GM12878 (cell line): ENCODE measurements at regions of chr18 and their contacts with region 1.

Region 1: DNA sequence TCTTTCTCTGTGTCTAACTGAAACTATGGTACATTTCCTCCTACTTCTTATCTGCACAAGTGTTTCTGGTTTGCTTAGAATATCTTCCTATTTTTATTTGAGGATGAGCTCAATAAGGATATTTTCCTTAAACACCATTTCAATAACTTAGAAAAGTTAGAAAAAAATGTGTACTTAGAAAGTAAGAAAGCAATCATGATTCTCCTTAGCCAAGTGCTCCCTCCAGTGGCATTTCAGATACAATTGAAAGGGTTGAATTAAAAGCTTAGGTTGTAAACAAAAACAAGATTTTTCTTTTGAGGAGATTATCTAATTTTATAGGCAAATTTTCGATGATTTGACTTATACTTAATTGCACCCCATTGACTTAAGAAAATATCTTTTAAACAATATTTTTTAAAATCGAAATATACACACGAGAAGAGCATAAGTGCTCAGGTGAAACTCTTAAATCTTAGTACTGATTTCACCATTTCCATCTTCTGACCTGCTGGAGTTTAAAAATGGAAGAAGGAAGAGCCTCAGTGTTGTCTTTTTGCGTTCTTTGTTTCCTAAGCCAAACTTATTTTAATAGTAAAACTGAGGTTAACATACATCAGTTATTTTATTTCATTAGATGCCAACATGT is 26.9 kb downstream of the C18orf63 start:
- DNase-seq: no peak
- ATAC-seq: 0 out of 3 replicates have a peak, but pooled peaks have one; percentile 45
- H3K4me3 ChIP-seq: no peak overlapping the region
- H3K27ac ChIP-seq: no peak overlapping the region
- H3K4me1 ChIP-seq: no peaks in the 10 kb centered on the region
- H3K27me3 ChIP-seq: no peaks in the 10 kb centered on the region
- CTCF ChIP-seq: peak; percentile 35 to 74 (median 38); a peak in 5 of 6 replicates
- EP300 ChIP-seq: no peak
- POLR2A ChIP-seq: no peak
- RAD21 ChIP-seq: peak; percentile 90

Region 2: GRCh38 chr18:74040459-74041332 is 301.8 kb before region 1 on chr18:
- CTCF ChIA-PET with region 1: interaction called, 15 read pairs
- POLR2A ChIA-PET with region 1: no interaction called
- RAD21 ChIA-PET with region 1: no interaction called
- SMC1A ChIA-PET with region 1: interaction called, 5 read pairs
- in situ Hi-C with region 1: no loop called
- intact Hi-C with region 1: loop called (anchors 1 kb)
- DNase-seq: no peak
- ATAC-seq: peak; percentile 97
- H3K4me3 ChIP-seq: no peak overlapping the region
- H3K27ac ChIP-seq: no peak overlapping the region
- H3K4me1 ChIP-seq: no peaks in the 10 kb centered on the region
- H3K27me3 ChIP-seq: no peaks in the 10 kb centered on the region; a peak in 1 of 4 replicates
- CTCF ChIP-seq: peak; percentile 62 to 77 (median 73)
- EP300 ChIP-seq: no peak
- POLR2A ChIP-seq: no peak
- RAD21 ChIP-seq: peak; percentile 61

Region 3: DNA sequence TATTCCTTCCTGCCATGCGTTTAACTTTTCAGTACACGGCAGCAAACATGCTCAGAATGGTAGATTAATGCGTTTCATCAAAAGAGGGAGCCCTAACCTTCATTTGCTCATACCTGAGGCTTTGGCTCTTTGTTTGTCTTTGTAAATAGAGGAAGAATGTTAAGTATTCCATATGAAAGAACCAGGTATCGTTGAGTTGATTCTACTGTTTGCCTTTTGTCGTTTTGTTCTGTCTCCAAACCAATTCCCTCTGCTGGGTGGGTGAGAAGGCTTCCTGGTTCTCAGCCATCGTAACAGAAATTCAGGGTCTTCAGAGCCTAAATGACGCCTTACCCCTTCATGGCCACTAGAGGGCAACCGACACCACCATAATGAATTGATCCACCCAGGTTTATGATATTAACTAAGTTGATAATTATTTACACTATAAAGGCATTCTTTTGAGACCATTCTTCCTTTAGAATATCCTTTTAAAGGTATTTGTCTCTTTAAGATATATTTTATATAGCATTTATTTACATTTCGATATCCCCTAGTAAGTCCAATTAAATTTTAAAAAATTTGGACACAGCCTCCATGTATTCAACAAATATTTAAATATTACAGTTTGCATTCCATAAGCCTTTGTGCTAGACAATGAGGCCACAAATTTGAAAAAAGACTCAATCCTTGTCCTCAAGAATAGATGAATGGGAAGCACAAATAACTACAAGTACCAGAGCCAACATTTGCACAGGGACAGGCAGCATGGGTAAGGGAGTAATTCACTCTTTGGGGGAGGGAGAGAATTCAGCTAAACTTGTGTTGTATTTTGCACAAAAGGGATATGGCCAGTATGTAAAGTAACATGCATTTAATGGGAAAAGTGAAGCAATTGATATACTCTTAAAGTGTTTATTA is 146.1 kb before region 1 on chr18:
- CTCF ChIA-PET with region 1: interaction called, 79 read pairs
- POLR2A ChIA-PET with region 1: no interaction called
- RAD21 ChIA-PET with region 1: interaction called, 44 read pairs
- SMC1A ChIA-PET with region 1: interaction called, 45 read pairs
- in situ Hi-C with region 1: no loop called
- intact Hi-C with region 1: loop called (anchors 1 kb)
- DNase-seq: peak; percentile 36
- ATAC-seq: peak; percentile 93
- H3K4me3 ChIP-seq: no peak overlapping the region
- H3K27ac ChIP-seq: no peak overlapping the region
- H3K4me1 ChIP-seq: no peaks in the 10 kb centered on the region
- H3K27me3 ChIP-seq: peaks cover 0 to 3% of the 10 kb centered on the region in 2 experiments; a peak in 1 of 4 replicates
- CTCF ChIP-seq: peak; percentile 65 to 85 (median 67)
- EP300 ChIP-seq: no peak
- POLR2A ChIP-seq: no peak
- RAD21 ChIP-seq: peak; percentile 89

Region 4: DNA sequence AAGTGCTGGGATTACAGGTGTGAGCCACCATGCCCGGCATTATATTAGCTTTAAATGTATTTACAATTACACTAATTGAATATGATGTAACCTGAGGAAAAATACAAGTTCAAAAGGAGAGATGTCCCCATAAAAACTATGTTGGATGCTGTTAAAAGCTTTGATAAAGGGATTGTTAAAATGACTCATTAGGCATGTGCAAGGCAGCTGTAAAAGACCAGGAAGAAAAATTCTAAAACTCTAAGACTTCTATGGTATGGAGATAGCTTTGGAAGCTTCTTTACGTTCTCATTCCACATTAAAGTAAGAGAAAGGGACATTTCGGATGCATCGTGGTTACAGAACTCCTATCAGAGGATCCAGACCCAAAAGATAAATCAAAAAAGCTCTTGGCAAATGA is 101.1 kb before region 1 on chr18:
- CTCF ChIA-PET with region 1: interaction called, 13 read pairs
- POLR2A ChIA-PET with region 1: no interaction called
- RAD21 ChIA-PET with region 1: interaction called, 7 read pairs
- SMC1A ChIA-PET with region 1: interaction called, 6 read pairs
- in situ Hi-C with region 1: no loop called
- intact Hi-C with region 1: no loop called
- DNase-seq: no peak
- ATAC-seq: no peak
- H3K4me3 ChIP-seq: no peak overlapping the region
- H3K27ac ChIP-seq: no peak overlapping the region
- H3K4me1 ChIP-seq: no peaks in the 10 kb centered on the region
- H3K27me3 ChIP-seq: peaks cover 0 to 3% of the 10 kb centered on the region in 2 experiments
- CTCF ChIP-seq: no peak
- EP300 ChIP-seq: no peak
- POLR2A ChIP-seq: no peak
- RAD21 ChIP-seq: no peak

Region 5: GRCh38 chr18:74331404-74331803 is 11.1 kb before region 1 on chr18:
- CTCF ChIA-PET with region 1: interaction called, 10 read pairs
- POLR2A ChIA-PET with region 1: no interaction called
- RAD21 ChIA-PET with region 1: no interaction called
- SMC1A ChIA-PET with region 1: interaction called, 6 read pairs
- in situ Hi-C with region 1: no loop called
- intact Hi-C with region 1: no loop called
- DNase-seq: no peak
- ATAC-seq: peak; percentile 79
- H3K4me3 ChIP-seq: no peak overlapping the region
- H3K27ac ChIP-seq: no peak overlapping the region
- H3K4me1 ChIP-seq: peaks cover 5% of the 10 kb centered on the region
- H3K27me3 ChIP-seq: no peaks in the 10 kb centered on the region
- CTCF ChIP-seq: peak; percentile 32 to 39 (median 37); a peak in 5 of 6 replicates
- EP300 ChIP-seq: no peak
- POLR2A ChIP-seq: no peak
- RAD21 ChIP-seq: 0 out of 2 replicates have a peak, but pooled peaks have one; percentile 27

Region 6: DNA sequence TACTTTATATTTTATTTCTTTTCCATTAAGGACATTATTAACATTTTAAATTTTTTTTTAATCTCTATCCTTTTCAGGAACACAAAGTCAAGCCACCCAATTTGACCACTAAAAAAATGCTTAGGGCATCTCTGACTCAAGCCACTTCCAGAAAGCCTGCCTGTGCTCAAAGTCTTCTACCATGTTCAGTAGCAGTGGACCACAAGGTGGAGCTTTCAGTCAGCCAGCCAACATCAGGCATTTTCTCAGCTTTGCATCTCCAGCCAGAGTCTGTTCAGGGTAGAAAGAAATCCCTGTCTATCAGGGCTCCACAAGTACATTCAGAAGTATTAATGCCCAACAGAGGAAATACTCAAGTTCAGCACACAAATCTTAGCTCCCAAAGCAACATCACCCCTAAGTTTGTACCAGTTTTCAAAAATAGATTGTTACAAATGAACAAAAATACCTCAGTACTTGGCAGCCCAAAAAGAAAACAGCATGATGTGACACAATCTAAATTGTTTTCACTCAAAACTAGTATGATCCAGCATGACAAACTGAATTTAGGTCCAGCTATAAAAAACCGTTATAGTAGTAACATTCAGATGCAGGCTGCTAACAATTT is 10.7 kb after region 1 on chr18:
- CTCF ChIA-PET with region 1: interaction called, 16 read pairs
- POLR2A ChIA-PET with region 1: no interaction called
- RAD21 ChIA-PET with region 1: no interaction called
- SMC1A ChIA-PET with region 1: interaction called, 7 read pairs
- in situ Hi-C with region 1: no loop called
- intact Hi-C with region 1: no loop called
- DNase-seq: peak; percentile 24
- ATAC-seq: peak; percentile 88
- H3K4me3 ChIP-seq: no peak overlapping the region
- H3K27ac ChIP-seq: no peak overlapping the region
- H3K4me1 ChIP-seq: peaks cover 3% of the 10 kb centered on the region; the same call in 1 of the 2 replicates
- H3K27me3 ChIP-seq: peaks cover 0 to 2% of the 10 kb centered on the region in 2 experiments; a peak in 1 of 4 replicates
- CTCF ChIP-seq: peak; percentile 67 to 72 (median 71); a peak in 5 of 6 replicates
- EP300 ChIP-seq: no peak
- POLR2A ChIP-seq: no peak
- RAD21 ChIP-seq: peak; percentile 83

Region 7: DNA sequence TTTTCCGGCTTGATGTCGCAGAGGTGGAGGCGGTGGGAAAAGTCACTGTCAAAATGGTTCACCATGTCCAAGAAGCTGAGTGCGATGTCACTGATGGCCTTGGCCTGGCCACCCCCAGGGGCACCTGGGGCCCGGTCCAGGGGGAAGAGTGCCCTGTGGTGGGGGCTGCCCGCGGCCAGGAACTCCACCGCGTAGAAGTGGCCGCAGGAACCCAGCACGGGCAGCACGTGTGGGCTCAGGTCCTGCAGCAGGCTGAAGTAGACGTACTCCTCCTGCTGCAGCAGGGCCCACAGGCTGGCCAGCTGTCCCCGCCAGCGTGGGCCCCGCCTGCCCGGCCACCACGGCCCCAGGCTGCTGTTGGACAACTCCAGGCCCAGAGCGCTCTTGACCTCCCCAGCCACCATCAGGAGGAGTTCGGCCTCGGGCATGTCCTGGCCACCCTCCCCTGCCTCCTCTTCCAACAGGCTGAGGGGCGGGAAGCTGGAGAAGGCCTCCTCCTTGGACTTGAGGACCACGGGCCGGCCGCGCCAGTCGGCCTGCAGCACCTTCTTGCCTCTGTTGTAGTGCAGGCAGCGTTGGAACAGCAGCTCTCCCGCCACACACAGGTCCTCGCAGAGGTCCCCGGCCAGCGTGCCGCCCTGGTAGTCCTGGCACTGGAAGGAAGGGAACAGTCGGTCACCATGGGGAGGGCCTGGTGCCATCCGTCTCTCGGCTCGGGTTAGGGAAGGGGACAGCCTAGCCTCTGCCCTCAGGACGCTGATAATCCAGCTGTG is 104.3 kb after region 1 on chr18:
- CTCF ChIA-PET with region 1: no interaction called
- POLR2A ChIA-PET with region 1: no interaction called
- RAD21 ChIA-PET with region 1: no interaction called
- SMC1A ChIA-PET with region 1: no interaction called
- in situ Hi-C with region 1: no loop called
- intact Hi-C with region 1: no loop called
- DNase-seq: no peak
- ATAC-seq: no peak
- H3K4me3 ChIP-seq: no peak overlapping the region
- H3K27ac ChIP-seq: no peak overlapping the region
- H3K4me1 ChIP-seq: no peaks in the 10 kb centered on the region
- H3K27me3 ChIP-seq: peaks cover 0 to 5% of the 10 kb centered on the region in 2 experiments; a peak in 2 of 4 replicates
- CTCF ChIP-seq: no peak
- EP300 ChIP-seq: no peak
- POLR2A ChIP-seq: no peak
- RAD21 ChIP-seq: no peak

Region 8: DNA sequence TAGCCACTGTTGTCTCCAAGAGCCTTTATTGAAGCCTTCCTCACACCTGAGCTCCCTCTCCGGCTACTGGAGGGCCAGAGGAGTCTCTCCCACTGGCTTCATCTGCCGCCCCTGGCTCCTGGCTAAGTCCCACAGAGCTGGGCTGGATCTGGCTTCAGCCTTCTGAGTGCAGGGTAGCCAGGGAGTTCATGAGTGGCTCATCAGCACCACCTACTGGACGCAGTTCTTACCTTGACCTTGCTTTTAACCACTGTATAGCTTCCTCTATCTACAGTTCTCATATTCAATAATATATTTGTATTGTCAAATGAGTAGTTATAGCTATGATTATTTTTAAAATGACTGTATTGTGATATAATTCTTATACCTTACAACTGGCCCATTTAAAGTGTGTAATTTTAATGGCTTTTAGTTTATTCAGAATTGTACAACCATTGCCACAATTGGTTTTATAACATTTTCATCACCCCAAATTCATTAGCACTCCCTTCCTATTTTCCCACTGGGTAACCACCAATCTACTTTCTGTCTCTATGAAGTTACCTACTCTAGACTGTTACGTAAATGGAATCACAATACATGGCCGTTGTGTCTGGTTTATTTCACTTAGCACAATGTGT is 209.5 kb after region 1 on chr18:
- CTCF ChIA-PET with region 1: interaction called, 14 read pairs
- POLR2A ChIA-PET with region 1: no interaction called
- RAD21 ChIA-PET with region 1: interaction called, 10 read pairs
- SMC1A ChIA-PET with region 1: interaction called, 9 read pairs
- in situ Hi-C with region 1: no loop called
- intact Hi-C with region 1: no loop called
- DNase-seq: peak; percentile 51
- ATAC-seq: peak; percentile 100
- H3K4me3 ChIP-seq: no peak overlapping the region
- H3K27ac ChIP-seq: no peak overlapping the region
- H3K4me1 ChIP-seq: 0 out of 2 replicates have a peak, but pooled peaks cover 4% of the 10 kb centered on the region
- H3K27me3 ChIP-seq: no peaks in the 10 kb centered on the region; a peak in 1 of 4 replicates
- CTCF ChIP-seq: peak; percentile 76 to 92 (median 76); a peak in 5 of 6 replicates
- EP300 ChIP-seq: no peak
- POLR2A ChIP-seq: no peak
- RAD21 ChIP-seq: peak; percentile 86